B cell (primary cell): ENCODE measurements at regions of chr2 and their contacts with region 1.

Region 1: DNA sequence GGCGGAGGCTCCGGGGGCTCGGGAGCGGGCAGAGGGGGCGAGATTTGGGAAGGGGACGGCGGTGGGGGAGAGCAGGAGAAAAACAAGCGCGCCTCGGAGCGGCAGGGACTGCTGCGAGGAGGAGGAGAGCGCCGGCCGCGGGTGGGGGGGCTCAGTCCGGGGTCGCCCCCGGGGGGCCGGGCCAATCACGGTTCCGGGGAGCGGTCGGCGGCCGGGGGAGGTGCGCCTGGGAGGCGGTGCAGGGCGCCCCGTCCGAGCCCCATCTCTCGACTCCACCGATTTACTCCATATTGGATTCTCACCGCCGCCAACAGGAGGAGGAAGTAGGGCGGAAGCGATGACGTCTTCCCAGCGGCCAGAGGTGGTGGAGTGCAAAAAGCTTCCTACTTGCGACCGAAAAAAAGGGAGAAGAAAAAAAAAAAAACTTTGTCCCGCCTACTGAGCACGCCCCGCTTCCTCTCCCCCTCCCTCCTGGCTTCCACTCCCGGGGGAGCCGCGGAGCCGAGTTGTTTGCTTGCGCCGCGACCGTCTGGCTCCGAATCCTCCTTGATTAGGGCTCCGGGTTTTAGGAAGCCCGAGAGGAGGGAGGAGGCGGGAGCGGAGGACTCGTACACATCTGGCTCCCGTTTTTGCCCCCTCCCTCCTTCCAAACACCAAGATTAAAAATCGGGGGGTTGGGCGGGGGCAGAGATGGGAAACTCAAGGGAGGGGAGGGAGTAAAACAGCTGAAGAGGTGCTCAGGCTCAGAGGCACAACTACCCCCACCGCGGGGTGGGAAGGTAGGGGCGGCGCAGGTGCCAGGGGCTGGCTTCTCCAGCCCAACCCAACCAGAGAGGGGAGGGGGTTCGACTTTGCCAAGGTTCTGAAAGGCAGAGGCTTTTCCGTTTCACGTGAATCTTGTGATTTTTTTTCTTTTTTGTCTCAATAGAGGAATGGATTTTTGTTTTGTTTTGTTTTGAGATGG is at the start of gene SPRED2:
- DNase-seq: peak; percentile 83
- ATAC-seq: peak; percentile 31
- H3K4me3 ChIP-seq: peak within 1 kb of the TSS; percentile 62 to 96 (median 71)
- H3K4me3 Mint-ChIP-seq: peak within 1 kb of the TSS; percentile 91
- H3K27ac ChIP-seq: peak within 1 kb of the TSS in 1 of 2 donors; percentile 60
- H3K27ac Mint-ChIP-seq: peak within 1 kb of the TSS; percentile 84
- H3K4me1 ChIP-seq: peaks cover 16 to 38% of the 10 kb centered on the region in 2 donors
- H3K4me1 Mint-ChIP-seq: peaks cover 30% of the 10 kb centered on the region
- H3K27me3 ChIP-seq: peaks cover 0 to 47% (median 27%) of the 10 kb centered on the region in 4 experiments
- H3K27me3 Mint-ChIP-seq: peaks cover 33% of the 10 kb centered on the region
- CTCF ChIP-seq: no peak
- total RNA-seq, gene SPRED2: 0.53 and 1.3 TPM in 2 replicates

Region 2: GRCh38 chr2:64932371-64933216 is 499.9 kb before region 1 on chr2:
- CTCF ChIA-PET with region 1: no interaction called
- POLR2A ChIA-PET with region 1: no interaction called
- intact Hi-C with region 1: loop called (anchors 5 kb)
- DNase-seq: peak; percentile 68
- ATAC-seq: peak; percentile 75
- H3K4me3 ChIP-seq: peak overlapping the region; percentile 51 to 66 (median 59)
- H3K4me3 Mint-ChIP-seq: peak overlapping the region; percentile 83
- H3K27ac ChIP-seq: peak overlapping the region; percentile 74 to 87
- H3K27ac Mint-ChIP-seq: peak overlapping the region; percentile 83
- H3K4me1 ChIP-seq: peaks cover 92 to 95% of the 10 kb centered on the region in 2 donors
- H3K4me1 Mint-ChIP-seq: peaks cover 88% of the 10 kb centered on the region
- H3K27me3 ChIP-seq: no peaks in the 10 kb centered on the region
- H3K27me3 Mint-ChIP-seq: no peaks in the 10 kb centered on the region
- CTCF ChIP-seq: no peak

Region 3: GRCh38 chr2:65227425-65228262 is 204.9 kb before region 1 on chr2 and contains the start of gene ACTR2:
- CTCF ChIA-PET with region 1: no interaction called
- POLR2A ChIA-PET with region 1: no interaction called
- intact Hi-C with region 1: loop called (anchors 1 kb)
- DNase-seq: peak; percentile 97
- ATAC-seq: peak; percentile 90
- H3K4me3 ChIP-seq: peak within 1 kb of the TSS; percentile 86 to 100 (median 98)
- H3K4me3 Mint-ChIP-seq: peak within 1 kb of the TSS; percentile 93
- H3K27ac ChIP-seq: peak within 1 kb of the TSS; percentile 97
- H3K27ac Mint-ChIP-seq: peak within 1 kb of the TSS; percentile 100
- H3K4me1 ChIP-seq: peaks cover 39 to 44% of the 10 kb centered on the region in 2 donors
- H3K4me1 Mint-ChIP-seq: peaks cover 37% of the 10 kb centered on the region
- H3K27me3 ChIP-seq: no peaks in the 10 kb centered on the region
- H3K27me3 Mint-ChIP-seq: no peaks in the 10 kb centered on the region
- CTCF ChIP-seq: no peak
- total RNA-seq, gene ACTR2: 270 and 284 TPM in 2 replicates

Region 4: DNA sequence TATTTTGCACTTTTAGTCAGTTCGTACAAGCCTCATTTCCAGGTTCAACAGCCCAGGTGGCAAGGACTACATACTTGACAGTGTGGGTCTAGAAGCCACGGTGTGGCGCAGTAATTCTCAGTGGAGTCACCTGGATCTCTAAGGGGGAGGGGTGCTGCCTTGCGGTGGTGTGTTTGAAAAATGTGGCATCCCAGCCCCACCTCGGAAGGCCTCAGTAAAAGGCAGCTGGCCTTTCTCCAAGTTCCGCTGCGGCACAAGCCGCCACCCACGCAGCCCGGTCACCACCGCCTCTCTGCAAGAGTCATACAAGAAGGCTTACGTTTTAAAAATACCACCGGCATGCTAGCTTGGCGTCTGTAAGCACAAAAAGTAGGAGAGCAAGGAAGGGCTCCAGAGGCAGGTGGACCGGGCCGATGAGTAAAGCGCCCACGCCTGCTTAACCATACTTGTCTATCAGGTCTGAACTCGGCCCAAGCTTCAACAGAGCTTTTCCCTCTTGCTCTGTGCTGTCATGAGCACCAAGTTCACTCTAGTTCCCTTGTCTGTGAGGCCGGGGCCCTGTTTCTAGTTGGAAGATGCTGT is 49.6 kb before region 1 on chr2:
- CTCF ChIA-PET with region 1: interaction called, 3 read pairs
- POLR2A ChIA-PET with region 1: no interaction called
- intact Hi-C with region 1: loop called (anchors 2 kb)
- DNase-seq: peak; percentile 69
- ATAC-seq: peak; percentile 80
- H3K4me3 ChIP-seq: peak overlapping the region in 1 of 5 experiments; percentile 42
- H3K4me3 Mint-ChIP-seq: peak overlapping the region; percentile 76
- H3K27ac ChIP-seq: peak overlapping the region in 1 of 2 donors; percentile 59
- H3K27ac Mint-ChIP-seq: peak overlapping the region; percentile 51
- H3K4me1 ChIP-seq: peaks cover 26 to 33% of the 10 kb centered on the region in 2 donors
- H3K4me1 Mint-ChIP-seq: peaks cover 30% of the 10 kb centered on the region
- H3K27me3 ChIP-seq: peaks cover 0 to 10% (median 0%) of the 10 kb centered on the region in 4 experiments
- H3K27me3 Mint-ChIP-seq: peaks cover 7% of the 10 kb centered on the region
- CTCF ChIP-seq: no peak

Region 5: DNA sequence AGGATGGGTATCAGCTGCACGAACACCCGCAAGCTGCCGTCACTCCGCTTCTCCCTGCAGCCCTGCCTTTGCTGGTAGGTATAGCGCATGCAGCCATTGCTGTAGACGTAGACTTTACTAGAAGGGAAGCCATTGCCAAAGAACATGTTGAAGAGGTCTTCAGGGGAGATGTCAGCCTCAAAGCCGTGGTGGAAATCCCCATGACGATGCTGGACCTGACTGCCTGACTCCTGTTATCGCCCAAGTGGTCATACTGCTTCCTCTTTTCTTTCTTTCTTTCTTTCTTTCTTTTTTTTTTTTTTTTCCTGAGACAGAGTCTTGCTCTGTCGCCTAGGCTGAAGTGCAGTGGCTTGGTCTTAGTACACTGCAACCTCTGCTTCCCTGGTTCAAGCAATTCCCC is 68.6 kb after region 1 on chr2:
- CTCF ChIA-PET with region 1: no interaction called
- POLR2A ChIA-PET with region 1: no interaction called
- intact Hi-C with region 1: no loop called
- DNase-seq: peak; percentile 33
- ATAC-seq: no peak
- H3K4me3 ChIP-seq: peak overlapping the region in 1 of 5 experiments; percentile 5
- H3K4me3 Mint-ChIP-seq: no peak overlapping the region
- H3K27ac ChIP-seq: no peak overlapping the region
- H3K27ac Mint-ChIP-seq: no peak overlapping the region
- H3K4me1 ChIP-seq: no peaks in the 10 kb centered on the region
- H3K4me1 Mint-ChIP-seq: peaks cover 5% of the 10 kb centered on the region
- H3K27me3 ChIP-seq: peaks cover 0 to 3% (median 0%) of the 10 kb centered on the region in 4 experiments
- H3K27me3 Mint-ChIP-seq: peaks cover 7% of the 10 kb centered on the region
- CTCF ChIP-seq: no peak